Gastrocnemius medialis (tissue), 4 donors: ENCODE measurements at regions of chr1 and their contacts with region 1.

Region 1: GRCh38 chr1:61049850-61050540 is 32.4 kb upstream of the NFIA start:
- DNase-seq: peak; percentile 87 to 95
- ATAC-seq: peak; percentile 66 to 70
- H3K4me3 ChIP-seq: peak overlapping the region; percentile 75 to 99 (median 96)
- H3K27ac ChIP-seq: peak overlapping the region; percentile 92 to 100 (median 96)
- H3K4me1 ChIP-seq: peaks cover 22 to 28% of the 10 kb centered on the region in 2 donors
- H3K27me3 ChIP-seq: no peaks in the 10 kb centered on the region
- CTCF ChIP-seq: peak; percentile 94 to 99 (median 97)
- POLR2A ChIP-seq: peak in 1 of 2 donors; percentile 54

Region 2: GRCh38 chr1:60068393-60069045 is 981.5 kb before region 1 on chr1:
- in situ Hi-C with region 1: no loop called
- intact Hi-C with region 1: no loop called
- DNase-seq: no peak
- ATAC-seq: no peak
- H3K4me3 ChIP-seq: no peak overlapping the region
- H3K27ac ChIP-seq: no peak overlapping the region
- H3K4me1 ChIP-seq: no peaks in the 10 kb centered on the region
- H3K27me3 ChIP-seq: peaks cover under 1 to 5% (median 2%) of the 10 kb centered on the region in 3 donors
- CTCF ChIP-seq: no peak
- POLR2A ChIP-seq: no peak

Region 3: DNA sequence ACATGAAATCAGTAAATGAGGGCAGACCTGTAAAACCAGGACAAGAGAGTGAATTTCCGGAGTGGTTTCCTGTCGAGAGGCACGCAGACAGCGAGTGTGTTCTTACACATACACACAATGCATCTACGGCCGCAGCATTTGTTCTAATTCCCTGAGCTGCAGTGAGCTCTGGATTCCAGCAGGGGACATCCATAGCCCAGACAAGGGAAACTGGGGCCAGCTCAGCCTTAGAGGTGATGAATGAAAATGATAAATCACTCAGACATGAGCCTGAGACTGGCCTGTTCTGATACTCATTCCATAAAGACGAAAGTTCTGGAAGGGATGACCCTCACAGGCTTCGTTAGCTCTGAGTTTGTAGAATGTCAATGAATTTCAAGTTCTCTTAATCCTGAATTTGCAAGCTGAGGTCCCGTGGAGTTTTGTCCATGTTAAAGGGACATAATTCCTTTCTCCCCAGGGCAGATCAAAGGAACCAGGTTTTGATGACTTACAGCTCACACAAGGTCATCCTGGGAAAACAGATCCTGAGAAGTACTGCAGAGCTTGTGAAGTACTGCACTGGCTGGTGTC is 768.5 kb before region 1 on chr1:
- in situ Hi-C with region 1: loop called in 3 of 4 experiments (anchors 25 kb)
- intact Hi-C with region 1: no loop called
- DNase-seq: peak; percentile 10 to 22
- ATAC-seq: peak; percentile 58 to 89
- H3K4me3 ChIP-seq: no peak overlapping the region
- H3K27ac ChIP-seq: no peak overlapping the region
- H3K4me1 ChIP-seq: peaks cover 0 to 9% of the 10 kb centered on the region in 2 donors
- H3K27me3 ChIP-seq: no peaks in the 10 kb centered on the region
- CTCF ChIP-seq: peak; percentile 41 to 79 (median 67)
- POLR2A ChIP-seq: no peak

Region 4: DNA sequence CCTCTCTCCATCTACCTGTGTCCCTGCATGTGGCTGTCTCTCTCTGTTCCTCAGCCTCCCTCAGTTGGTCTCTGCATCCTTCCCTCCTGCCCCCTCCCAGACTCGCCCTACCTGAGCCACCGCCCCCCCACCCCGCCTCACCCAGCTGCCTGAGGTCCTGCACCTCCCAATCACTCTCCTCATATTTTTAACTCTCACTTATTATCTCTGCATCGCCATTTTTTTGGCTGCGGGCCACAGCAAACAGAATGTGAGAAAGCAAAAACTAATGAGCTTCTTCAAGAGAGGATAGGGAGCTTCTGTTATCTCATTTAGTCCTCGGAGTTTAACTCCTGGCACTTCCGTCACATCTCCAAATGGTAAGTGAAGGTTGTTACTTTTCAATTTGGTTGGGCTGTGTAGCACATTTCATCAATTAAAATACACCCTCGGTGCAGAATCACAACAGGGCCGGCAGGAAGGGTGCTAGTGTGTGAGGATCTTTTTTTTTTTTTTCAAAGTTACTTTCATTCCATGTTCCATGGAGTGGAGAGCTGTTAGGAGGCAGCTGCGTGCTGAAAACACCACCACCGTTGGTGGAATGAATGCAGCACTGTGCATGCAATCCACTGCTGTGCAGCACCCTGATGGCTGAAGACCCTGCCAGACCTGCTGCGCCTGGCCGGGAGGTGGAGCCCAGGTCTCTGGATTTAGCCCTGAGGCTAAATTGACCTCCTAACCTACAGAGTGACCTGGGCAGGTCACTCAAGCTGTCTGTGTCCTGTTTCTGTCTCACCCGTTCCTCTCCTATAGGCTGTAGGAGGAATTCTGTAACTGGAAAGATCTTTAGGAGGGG is 124.8 kb before region 1 on chr1:
- in situ Hi-C with region 1: no loop called
- intact Hi-C with region 1: no loop called
- DNase-seq: no peak
- ATAC-seq: no peak
- H3K4me3 ChIP-seq: no peak overlapping the region
- H3K27ac ChIP-seq: no peak overlapping the region
- H3K4me1 ChIP-seq: peaks cover 9 to 23% of the 10 kb centered on the region in 2 donors
- H3K27me3 ChIP-seq: no peaks in the 10 kb centered on the region
- CTCF ChIP-seq: no peak
- POLR2A ChIP-seq: no peak

Region 5: DNA sequence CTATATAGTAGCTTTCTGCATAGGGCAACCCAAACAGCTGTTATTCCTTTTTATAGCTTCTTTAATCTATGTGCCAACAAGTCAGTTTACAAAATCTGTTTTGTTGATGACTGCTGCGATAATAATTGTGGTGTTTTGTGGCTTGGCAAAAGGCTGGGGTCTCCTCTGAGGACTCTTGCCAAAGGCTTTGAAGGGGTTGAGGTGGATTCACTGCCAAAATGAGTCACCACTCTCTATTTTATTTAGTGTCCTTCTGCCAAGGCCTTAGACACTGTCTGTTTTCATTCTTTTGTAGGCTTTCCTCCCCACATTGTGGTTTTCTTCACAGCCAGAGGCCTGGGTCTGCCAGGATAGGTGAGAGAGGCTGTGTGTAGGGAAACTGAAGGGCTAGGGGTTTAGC is 194.1 kb after region 1 on chr1:
- in situ Hi-C with region 1: loop called in 1 of 4 experiments (anchors 25 kb)
- intact Hi-C with region 1: loop called (anchors 5 kb)
- DNase-seq: peak in 1 of 2 donors; percentile 31
- ATAC-seq: peak; percentile 23 to 58
- H3K4me3 ChIP-seq: no peak overlapping the region
- H3K27ac ChIP-seq: peak overlapping the region; percentile 83 to 89 (median 86)
- H3K4me1 ChIP-seq: peaks cover 69% of the 10 kb centered on the region in 2 donors
- H3K27me3 ChIP-seq: no peaks in the 10 kb centered on the region
- CTCF ChIP-seq: no peak
- POLR2A ChIP-seq: no peak

Region 6: GRCh38 chr1:61343734-61344420 is 293.9 kb after region 1 on chr1:
- in situ Hi-C with region 1: loop called (anchors 5 to 25 kb)
- intact Hi-C with region 1: no loop called
- DNase-seq: no peak
- ATAC-seq: no peak
- H3K4me3 ChIP-seq: no peak overlapping the region
- H3K27ac ChIP-seq: no peak overlapping the region
- H3K4me1 ChIP-seq: peaks cover 24 to 32% of the 10 kb centered on the region in 2 donors
- H3K27me3 ChIP-seq: no peaks in the 10 kb centered on the region
- CTCF ChIP-seq: no peak
- POLR2A ChIP-seq: no peak

Region 7: DNA sequence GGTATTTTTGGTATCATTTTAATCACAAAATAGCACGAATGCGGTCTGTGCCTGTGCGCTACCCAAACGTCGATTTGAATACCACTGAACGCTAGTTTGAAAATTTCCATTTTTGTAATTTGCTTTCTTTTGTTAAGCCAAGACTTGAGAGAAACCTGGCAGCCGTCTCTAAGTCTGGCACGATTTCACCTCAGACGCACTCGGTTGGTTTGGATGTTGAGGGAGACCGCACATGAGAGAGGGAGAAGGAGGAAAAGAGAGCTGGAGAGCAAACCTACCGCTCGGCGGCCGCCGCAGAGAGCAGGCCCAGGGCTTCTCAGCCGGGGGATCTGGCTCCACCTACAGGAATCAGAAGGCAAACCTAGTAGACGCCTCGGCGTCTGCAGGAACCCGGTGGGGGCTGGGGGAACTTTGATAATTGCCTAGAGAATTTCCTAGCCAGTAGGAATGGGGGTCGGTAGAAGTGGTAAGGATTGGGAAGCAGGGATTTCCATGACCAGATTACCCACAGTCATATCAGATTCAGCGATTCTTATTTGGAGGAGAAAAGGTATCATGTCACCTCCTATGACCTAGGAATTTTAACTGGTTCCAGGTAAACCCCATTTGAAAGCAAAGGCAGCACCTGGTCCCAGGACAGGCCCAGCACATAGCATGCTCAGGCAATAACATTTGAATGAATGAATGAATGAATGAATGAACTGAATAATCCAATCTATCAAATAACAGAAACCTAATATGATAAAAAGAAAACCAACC is 591.8 kb after region 1 on chr1:
- in situ Hi-C with region 1: loop called in 3 of 4 experiments (anchors 25 kb)
- intact Hi-C with region 1: loop called (anchors 1 kb)
- DNase-seq: peak; percentile 57 to 71
- ATAC-seq: peak; percentile 60 to 79
- H3K4me3 ChIP-seq: peak overlapping the region; percentile 18 to 36 (median 24)
- H3K27ac ChIP-seq: peak overlapping the region; percentile 32 to 59 (median 51)
- H3K4me1 ChIP-seq: peaks cover 0 to 22% of the 10 kb centered on the region in 2 donors
- H3K27me3 ChIP-seq: no peaks in the 10 kb centered on the region
- CTCF ChIP-seq: peak; percentile 24 to 78 (median 53)
- POLR2A ChIP-seq: no peak

Region 8: GRCh38 chr1:61842871-61843514 is 793.0 kb after region 1 on chr1:
- in situ Hi-C with region 1: loop called in 2 of 4 experiments (anchors 10 to 25 kb)
- intact Hi-C with region 1: no loop called
- DNase-seq: no peak
- ATAC-seq: no peak
- H3K4me3 ChIP-seq: no peak overlapping the region
- H3K27ac ChIP-seq: no peak overlapping the region
- H3K4me1 ChIP-seq: peaks cover 12 to 15% of the 10 kb centered on the region in 2 donors
- H3K27me3 ChIP-seq: no peaks in the 10 kb centered on the region
- CTCF ChIP-seq: no peak
- POLR2A ChIP-seq: no peak